ENCODE measurements at regions of chr1 and their contacts with region 1.

Region 1: GRCh38 chr1:201254625-201255506 is 28.4 kb upstream of the PKP1 start:
- DNase-seq: no peak

Region 2: DNA sequence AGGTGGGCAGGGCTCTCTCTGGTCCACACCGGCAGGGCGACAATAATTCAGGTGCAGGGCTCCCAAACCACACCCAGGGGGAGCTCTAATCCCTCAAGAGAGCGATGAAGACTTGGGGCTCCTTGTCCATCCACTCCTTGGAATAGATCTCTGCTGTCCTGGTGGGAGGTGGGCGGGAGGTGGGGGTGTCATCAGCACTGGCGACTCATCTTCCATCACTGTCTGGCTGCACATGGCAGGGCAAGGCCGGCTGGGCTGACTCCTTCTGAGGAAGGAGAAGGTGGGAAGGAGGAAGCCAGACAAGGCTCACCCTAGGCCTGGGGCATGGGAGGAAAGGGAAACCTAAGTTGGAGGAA is 93.3 kb after region 1 on chr1:
- intact Hi-C with region 1: loop called (anchors 1 kb)
- DNase-seq: peak; percentile 77

Region 3: GRCh38 chr1:201361652-201362504 is 107.0 kb after region 1 on chr1:
- intact Hi-C with region 1: loop called (anchors 2 kb)
- DNase-seq: peak; percentile 76